ENCODE measurements at regions of chr5 and their contacts with region 1.

Region 1: GRCh38 chr5:123951186-123951977 is 439.4 kb downstream of the CSNK1G3 start:
- DNase-seq: peak; percentile 86
- ATAC-seq: peak; percentile 93
- H3K4me3 ChIP-seq: peak overlapping the region; percentile 41; the same call in 1 of the 2 replicates
- H3K27ac ChIP-seq: peak overlapping the region; percentile 41
- H3K4me1 ChIP-seq: peaks cover 16% of the 10 kb centered on the region
- H3K27me3 ChIP-seq: no peaks in the 10 kb centered on the region
- CTCF ChIP-seq: no peak

Region 2: GRCh38 chr5:123700398-123701287 is 250.7 kb before region 1 on chr5:
- CTCF ChIA-PET with region 1: no interaction called
- POLR2A ChIA-PET with region 1: no interaction called
- intact Hi-C with region 1: loop called (anchors 1 kb)
- DNase-seq: peak; percentile 84
- ATAC-seq: peak; percentile 96
- H3K4me3 ChIP-seq: no peak overlapping the region
- H3K27ac ChIP-seq: peak overlapping the region; percentile 73
- H3K4me1 ChIP-seq: peaks cover 19% of the 10 kb centered on the region
- H3K27me3 ChIP-seq: no peaks in the 10 kb centered on the region
- CTCF ChIP-seq: no peak

Region 3: GRCh38 chr5:124102486-124102885 is 151.1 kb after region 1 on chr5:
- CTCF ChIA-PET with region 1: no interaction called
- POLR2A ChIA-PET with region 1: no interaction called
- intact Hi-C with region 1: loop called (anchors 5 kb)
- DNase-seq: peak; percentile 24
- ATAC-seq: no peak
- H3K4me3 ChIP-seq: no peak overlapping the region
- H3K27ac ChIP-seq: no peak overlapping the region
- H3K4me1 ChIP-seq: peaks cover 26% of the 10 kb centered on the region
- H3K27me3 ChIP-seq: no peaks in the 10 kb centered on the region
- CTCF ChIP-seq: no peak

Region 4: GRCh38 chr5:124157320-124157719 is 205.9 kb after region 1 on chr5:
- CTCF ChIA-PET with region 1: no interaction called
- POLR2A ChIA-PET with region 1: no interaction called
- intact Hi-C with region 1: loop called (anchors 5 kb)
- DNase-seq: no peak
- ATAC-seq: no peak
- H3K4me3 ChIP-seq: peak overlapping the region; percentile 52
- H3K27ac ChIP-seq: no peak overlapping the region
- H3K4me1 ChIP-seq: no peaks in the 10 kb centered on the region
- H3K27me3 ChIP-seq: no peaks in the 10 kb centered on the region
- CTCF ChIP-seq: no peak

Region 5: GRCh38 chr5:124741711-124742496 is 790.5 kb after region 1 on chr5:
- CTCF ChIA-PET with region 1: no interaction called
- POLR2A ChIA-PET with region 1: no interaction called
- intact Hi-C with region 1: loop called (anchors 2 kb)
- DNase-seq: peak; percentile 84
- ATAC-seq: peak; percentile 23; the same call in 1 of the 2 replicates
- H3K4me3 ChIP-seq: peak overlapping the region; percentile 25; the same call in 1 of the 2 replicates
- H3K27ac ChIP-seq: peak overlapping the region; percentile 75
- H3K4me1 ChIP-seq: peaks cover 53% of the 10 kb centered on the region
- H3K27me3 ChIP-seq: no peaks in the 10 kb centered on the region
- CTCF ChIP-seq: no peak